HepG2 (cell line): ENCODE measurements at regions of chr6 and their contacts with region 1.

Region 1: DNA sequence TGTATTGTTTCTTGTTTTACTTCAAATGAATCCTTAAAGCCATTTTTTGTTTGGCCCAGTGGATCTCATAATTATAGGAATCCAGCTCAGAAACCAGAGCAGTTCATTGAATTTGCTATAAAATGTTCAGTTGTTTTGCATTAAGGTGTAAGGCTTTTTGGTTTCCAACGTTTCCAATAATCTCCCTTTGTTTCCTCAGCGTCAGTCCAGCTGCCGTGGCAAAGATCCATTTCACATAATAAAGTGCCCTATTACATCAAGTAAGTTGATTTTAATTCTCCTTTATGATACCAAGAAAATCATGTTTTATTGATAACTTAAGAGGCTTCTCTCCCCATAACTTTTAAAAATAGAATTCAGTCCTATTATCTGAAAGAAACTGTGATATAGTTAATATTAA is 472.6 kb downstream of the UTRN start:
- DNase-seq: no peak
- ATAC-seq: no peak
- H3K4me3 ChIP-seq: no peak overlapping the region
- H3K27ac ChIP-seq: no peak overlapping the region
- H3K4me1 ChIP-seq: peaks cover 6% of the 10 kb centered on the region; the same call in 1 of the 2 replicates
- H3K27me3 ChIP-seq: no peaks in the 10 kb centered on the region
- CTCF ChIP-seq: no peak
- EP300 ChIP-seq: no peak
- POLR2A ChIP-seq: no peak
- RAD21 ChIP-seq: no peak

Region 2: GRCh38 chr6:144095331-144096002 is 662.3 kb before region 1 on chr6 and contains the start of gene SF3B5:
- CTCF ChIA-PET with region 1: no interaction called
- POLR2A ChIA-PET with region 1: no interaction called
- in situ Hi-C with region 1: no loop called
- intact Hi-C with region 1: no loop called
- DNase-seq: peak; percentile 100
- ATAC-seq: peak; percentile 96
- H3K4me3 ChIP-seq: peak within 1 kb of the TSS; percentile 88 to 100 (median 98)
- H3K27ac ChIP-seq: peak within 1 kb of the TSS; percentile 83
- H3K4me1 ChIP-seq: peaks cover 36% of the 10 kb centered on the region
- H3K27me3 ChIP-seq: no peaks in the 10 kb centered on the region; a peak in 1 of 5 replicates
- CTCF ChIP-seq: no peak; the same call in 1 of the 2 replicates
- EP300 ChIP-seq: peak in 1 of 2 experiments; percentile 30; a peak in 1 of 4 replicates
- POLR2A ChIP-seq: peak; percentile 99
- RAD21 ChIP-seq: peak; percentile 7; the same call in 1 of the 2 replicates
- total RNA-seq, gene SF3B5: 263 and 346 TPM in 2 replicates

Region 3: DNA sequence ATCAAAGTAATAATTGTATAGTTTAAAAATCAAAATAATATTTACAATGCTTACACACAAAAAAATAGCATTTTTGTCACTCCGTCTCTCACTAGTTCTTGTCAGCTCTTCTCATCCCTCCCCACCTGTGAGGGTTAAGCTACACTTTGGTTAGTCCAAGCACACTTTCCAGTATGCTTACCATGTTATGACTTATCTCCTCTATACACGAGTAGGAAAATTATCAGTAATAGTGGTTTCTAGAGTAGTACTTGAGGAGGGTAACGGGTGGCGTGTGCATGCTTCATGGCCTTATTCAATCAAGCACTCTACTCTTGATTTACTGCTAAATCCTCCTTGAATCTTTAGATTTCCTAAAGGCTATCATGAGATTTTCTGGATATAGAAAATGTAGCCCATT is 28.9 kb before region 1 on chr6:
- CTCF ChIA-PET with region 1: no interaction called
- POLR2A ChIA-PET with region 1: no interaction called
- in situ Hi-C with region 1: no loop called
- intact Hi-C with region 1: loop called (anchors 1 kb)
- DNase-seq: no peak
- ATAC-seq: no peak
- H3K4me3 ChIP-seq: no peak overlapping the region
- H3K27ac ChIP-seq: no peak overlapping the region
- H3K4me1 ChIP-seq: no peaks in the 10 kb centered on the region
- H3K27me3 ChIP-seq: no peaks in the 10 kb centered on the region
- CTCF ChIP-seq: no peak
- EP300 ChIP-seq: no peak
- POLR2A ChIP-seq: no peak
- RAD21 ChIP-seq: no peak

Region 4: GRCh38 chr6:144797881-144798595 is 40.3 kb after region 1 on chr6:
- CTCF ChIA-PET with region 1: no interaction called
- POLR2A ChIA-PET with region 1: no interaction called
- in situ Hi-C with region 1: no loop called
- intact Hi-C with region 1: no loop called
- DNase-seq: no peak
- ATAC-seq: no peak
- H3K4me3 ChIP-seq: no peak overlapping the region
- H3K27ac ChIP-seq: no peak overlapping the region
- H3K4me1 ChIP-seq: no peaks in the 10 kb centered on the region
- H3K27me3 ChIP-seq: no peaks in the 10 kb centered on the region
- CTCF ChIP-seq: no peak
- EP300 ChIP-seq: no peak
- POLR2A ChIP-seq: no peak
- RAD21 ChIP-seq: no peak

Region 5: GRCh38 chr6:145809211-145809610 is 1051.5 kb after region 1 on chr6:
- CTCF ChIA-PET with region 1: no interaction called
- POLR2A ChIA-PET with region 1: no interaction called
- in situ Hi-C with region 1: no loop called
- intact Hi-C with region 1: loop called (anchors 5 kb)
- DNase-seq: no peak
- ATAC-seq: no peak
- H3K4me3 ChIP-seq: no peak overlapping the region
- H3K27ac ChIP-seq: no peak overlapping the region
- H3K4me1 ChIP-seq: peaks cover 25% of the 10 kb centered on the region
- H3K27me3 ChIP-seq: no peaks in the 10 kb centered on the region
- CTCF ChIP-seq: no peak
- EP300 ChIP-seq: no peak
- POLR2A ChIP-seq: no peak
- RAD21 ChIP-seq: no peak